Mammary epithelial cell (primary cell): ENCODE measurements at regions of chr1 and their contacts with region 1.

Region 1: GRCh38 chr1:162285149-162285561 is 91.5 kb downstream of the SPATA46 start:
- DNase-seq: peak; percentile 84
- H3K4me3 ChIP-seq: no peak overlapping the region
- H3K27ac ChIP-seq: no peak overlapping the region
- H3K4me1 ChIP-seq: peaks cover 13% of the 10 kb centered on the region
- H3K27me3 ChIP-seq: no peaks in the 10 kb centered on the region
- CTCF ChIP-seq: no peak

Region 2: GRCh38 chr1:161766102-161766981 is 518.8 kb before region 1 on chr1 and contains the start of gene ATF6:
- CTCF ChIA-PET with region 1: no interaction called
- dilution Hi-C with region 1: no loop called
- in situ Hi-C with region 1: no loop called
- intact Hi-C with region 1: loop called (anchors 10 kb)
- DNase-seq: peak; percentile 93
- H3K4me3 ChIP-seq: peak within 1 kb of the TSS; percentile 61 to 94 (median 87)
- H3K27ac ChIP-seq: peak within 1 kb of the TSS; percentile 99
- H3K4me1 ChIP-seq: peaks cover 9% of the 10 kb centered on the region
- H3K27me3 ChIP-seq: no peaks in the 10 kb centered on the region
- CTCF ChIP-seq: no peak
- total RNA-seq, gene ATF6: 21.9 to 32.7 TPM